ENCODE measurements at regions of chr9 and their contacts with region 1.

Region 1: DNA sequence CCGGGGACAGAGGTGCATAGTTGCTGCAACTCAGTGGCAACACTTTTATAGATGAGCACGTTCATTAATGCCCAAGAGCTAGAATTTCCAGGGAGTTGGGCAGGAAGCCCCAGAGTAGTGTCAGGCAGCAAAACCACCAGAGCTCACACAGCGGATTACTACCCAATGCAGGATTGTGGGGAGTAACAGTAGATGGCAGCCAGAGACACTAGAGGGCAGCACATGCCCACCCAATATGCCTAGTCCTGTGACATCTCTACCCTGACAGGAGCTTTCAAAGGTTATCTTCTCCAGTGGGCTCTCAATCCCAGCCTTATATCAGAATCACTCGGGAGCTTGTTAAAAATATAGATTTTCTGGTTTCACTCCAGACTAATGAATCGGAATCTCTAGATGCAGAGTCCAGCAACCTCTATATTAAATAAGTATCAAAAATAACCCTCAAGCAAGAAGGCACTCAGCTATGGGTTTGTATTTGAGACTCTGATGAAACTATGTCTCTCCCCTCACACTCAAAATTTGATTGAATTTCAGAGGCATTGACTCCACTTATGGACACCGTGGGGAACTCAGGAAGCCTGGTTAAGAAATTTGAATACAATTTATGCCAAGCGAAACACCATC is 58.4 kb upstream of the PHF24 start:
- DNase-seq: peak; percentile 59 to 84 (median 77)
- ATAC-seq: peak; percentile 100
- H3K4me3 ChIP-seq: no peak overlapping the region
- H3K4me3 Mint-ChIP-seq: no peak overlapping the region
- H3K27ac ChIP-seq: no peak overlapping the region
- H3K27ac Mint-ChIP-seq: no peak overlapping the region
- H3K4me1 ChIP-seq: no peaks in the 10 kb centered on the region
- H3K4me1 Mint-ChIP-seq: no peaks in the 10 kb centered on the region
- H3K27me3 ChIP-seq: no peaks in the 10 kb centered on the region
- H3K27me3 Mint-ChIP-seq: peaks cover 27 to 59% (median 36%) of the 10 kb centered on the region in 5 donors

Region 2: DNA sequence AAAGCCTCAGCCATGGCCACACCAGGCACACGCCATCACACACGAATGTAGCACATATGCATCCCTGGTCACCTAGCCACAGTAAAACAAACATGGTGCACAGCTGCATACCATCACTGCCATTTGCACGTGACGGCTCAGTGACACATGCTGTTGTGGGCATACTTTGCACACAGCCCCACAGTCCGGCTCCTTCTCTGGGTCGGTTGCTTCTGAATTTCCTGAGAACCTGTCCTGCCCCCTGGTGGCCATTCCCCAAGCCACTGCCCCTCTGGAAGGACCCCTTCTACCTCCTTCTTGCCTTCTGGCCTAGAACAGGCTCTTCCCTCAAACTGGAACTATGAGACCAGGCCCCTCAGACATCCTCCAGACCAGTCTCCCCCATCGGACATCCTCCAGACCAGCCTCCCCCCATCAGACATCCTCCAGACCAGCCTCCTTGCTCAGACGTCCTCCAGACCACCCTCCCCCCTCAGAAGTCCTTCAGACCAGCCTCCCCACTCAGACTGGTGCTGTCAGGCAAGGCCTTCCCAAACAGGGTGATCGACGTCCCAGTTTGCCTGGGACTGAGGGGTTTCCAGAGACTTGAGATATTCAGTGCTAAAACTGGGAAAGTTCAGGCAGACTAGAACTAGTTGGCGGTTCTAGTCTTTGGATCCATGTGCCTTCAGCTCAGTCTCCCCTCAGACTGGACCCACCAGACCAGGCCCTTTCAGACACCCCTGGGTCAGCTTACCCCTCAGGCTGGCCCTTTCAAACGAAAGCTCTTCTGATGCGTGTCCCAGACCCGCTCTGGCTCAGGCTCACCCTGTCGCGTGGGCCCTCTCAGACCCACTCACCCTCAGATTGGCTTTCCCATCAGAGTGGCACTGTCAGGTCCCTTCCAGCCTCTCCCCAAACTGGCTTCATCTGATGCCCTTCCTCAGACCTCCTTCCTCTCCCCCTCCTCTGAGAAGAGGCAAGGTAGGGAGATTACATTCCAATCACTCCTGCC is 352.5 kb before region 1 on chr9:
- CTCF ChIA-PET with region 1: no interaction called
- POLR2A ChIA-PET with region 1: no interaction called
- intact Hi-C with region 1: no loop called
- DNase-seq: peak in 5 of 9 donors; percentile 21 to 47 (median 23)
- ATAC-seq: peak; percentile 58
- H3K4me3 ChIP-seq: no peak overlapping the region
- H3K4me3 Mint-ChIP-seq: peak overlapping the region in 1 of 10 donors; percentile 34
- H3K27ac ChIP-seq: no peak overlapping the region
- H3K27ac Mint-ChIP-seq: no peak overlapping the region
- H3K4me1 ChIP-seq: no peaks in the 10 kb centered on the region
- H3K4me1 Mint-ChIP-seq: peaks cover 0 to 10% (median 0%) of the 10 kb centered on the region in 7 donors
- H3K27me3 ChIP-seq: no peaks in the 10 kb centered on the region
- H3K27me3 Mint-ChIP-seq: peaks cover 7 to 34% (median 12%) of the 10 kb centered on the region in 5 donors

Region 3: DNA sequence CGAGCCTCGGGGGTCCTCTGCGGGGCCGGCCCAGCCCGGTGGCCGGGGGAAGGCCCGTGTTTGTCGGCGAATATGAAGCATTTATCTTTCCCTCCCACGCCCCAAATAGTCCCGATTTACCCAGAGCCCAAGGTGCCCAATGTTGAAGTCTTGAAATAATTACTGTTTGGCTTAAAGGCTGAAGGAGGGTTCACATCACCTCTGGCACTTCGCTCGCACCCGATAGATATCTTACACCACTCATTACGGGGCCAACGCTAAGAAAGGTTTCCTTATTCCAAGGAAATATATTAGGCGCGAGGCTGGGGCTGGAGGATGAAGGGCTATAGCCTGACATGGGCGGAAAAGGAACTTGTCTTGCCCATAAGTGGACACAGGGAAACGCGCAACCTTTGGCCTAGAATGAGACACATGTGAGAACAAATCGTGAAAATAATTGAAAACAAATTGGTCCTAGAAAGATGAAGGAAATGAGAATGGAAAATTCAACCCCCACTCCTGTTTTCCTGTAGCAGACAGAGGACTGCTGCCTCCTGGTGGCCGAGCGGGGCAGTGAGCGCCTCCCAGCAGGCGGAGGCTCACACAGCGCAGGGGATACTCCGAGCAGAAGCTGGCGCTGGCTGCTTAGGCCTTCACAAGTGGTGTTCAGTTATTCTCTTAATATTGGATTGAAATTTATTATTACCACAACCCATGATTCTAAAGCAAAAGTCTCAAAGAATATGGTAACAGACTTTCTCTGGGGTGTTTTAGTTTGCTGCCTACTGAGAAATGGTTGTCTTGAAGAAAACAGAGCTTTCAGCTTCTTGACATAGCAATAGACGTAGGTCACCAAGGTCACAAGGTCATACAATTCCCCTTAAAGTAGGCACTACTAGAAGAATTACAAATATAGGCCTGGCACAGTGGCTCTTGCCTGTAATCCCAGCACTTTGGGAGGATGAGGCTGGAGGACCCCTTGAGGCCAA is 197.6 kb before region 1 on chr9:
- CTCF ChIA-PET with region 1: no interaction called
- POLR2A ChIA-PET with region 1: no interaction called
- intact Hi-C with region 1: loop called in 1 of 2 experiments (anchors 5 kb)
- DNase-seq: peak; percentile 59 to 83 (median 73)
- ATAC-seq: peak; percentile 90
- H3K4me3 ChIP-seq: peak overlapping the region; percentile 61
- H3K4me3 Mint-ChIP-seq: peak overlapping the region; percentile 80 to 91 (median 84)
- H3K27ac ChIP-seq: no peak overlapping the region
- H3K27ac Mint-ChIP-seq: peak overlapping the region in 7 of 9 donors; percentile 1 to 84 (median 20)
- H3K4me1 ChIP-seq: no peaks in the 10 kb centered on the region
- H3K4me1 Mint-ChIP-seq: peaks cover 5 to 9% (median 6%) of the 10 kb centered on the region in 7 donors
- H3K27me3 ChIP-seq: no peaks in the 10 kb centered on the region
- H3K27me3 Mint-ChIP-seq: peaks cover 0 to 17% (median 0%) of the 10 kb centered on the region in 5 donors

Region 4: DNA sequence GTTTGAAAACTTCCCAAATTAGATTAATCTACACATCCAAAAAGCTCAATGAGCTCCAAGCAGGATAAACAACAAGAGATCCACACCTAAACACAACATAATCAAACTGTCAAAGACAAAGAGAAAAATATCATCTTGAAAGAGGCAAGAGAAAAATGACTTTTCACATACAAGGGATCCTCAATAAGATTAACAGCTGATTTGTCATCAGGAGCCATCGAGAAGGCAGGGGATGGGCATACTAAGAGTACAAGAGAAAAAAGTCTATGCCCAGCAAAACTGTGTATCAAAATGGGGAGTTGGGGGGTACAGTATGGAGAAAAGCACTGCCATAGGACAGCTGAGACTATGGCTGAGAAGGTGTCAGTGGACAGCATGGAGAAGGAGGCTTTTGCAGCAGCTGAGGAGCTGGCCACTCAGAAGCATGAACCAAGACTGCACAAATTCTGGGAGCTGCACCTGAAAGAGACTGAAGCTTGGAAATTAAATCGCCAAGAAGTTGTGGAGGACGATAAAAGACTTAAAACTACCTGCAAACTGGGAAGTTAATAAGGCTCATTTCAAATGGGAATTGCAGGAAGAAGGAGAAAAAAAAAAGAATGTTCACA is 110.8 kb after region 1 on chr9:
- CTCF ChIA-PET with region 1: no interaction called
- POLR2A ChIA-PET with region 1: no interaction called
- intact Hi-C with region 1: no loop called
- DNase-seq: no peak
- ATAC-seq: no peak
- H3K4me3 ChIP-seq: no peak overlapping the region
- H3K4me3 Mint-ChIP-seq: no peak overlapping the region
- H3K27ac ChIP-seq: no peak overlapping the region
- H3K27ac Mint-ChIP-seq: no peak overlapping the region
- H3K4me1 ChIP-seq: peaks cover 0 to 4% of the 10 kb centered on the region in 2 donors
- H3K4me1 Mint-ChIP-seq: peaks cover 0 to 17% (median 13%) of the 10 kb centered on the region in 7 donors
- H3K27me3 ChIP-seq: no peaks in the 10 kb centered on the region
- H3K27me3 Mint-ChIP-seq: no peaks in the 10 kb centered on the region

Region 5: GRCh38 chr9:35051069-35051967 is 151.7 kb after region 1 on chr9:
- CTCF ChIA-PET with region 1: interaction called, 20 read pairs
- POLR2A ChIA-PET with region 1: no interaction called
- intact Hi-C with region 1: loop called (anchors 1 kb)
- DNase-seq: peak in 8 of 9 donors; percentile 23 to 53 (median 46)
- ATAC-seq: peak; percentile 79
- H3K4me3 ChIP-seq: no peak overlapping the region
- H3K4me3 Mint-ChIP-seq: peak overlapping the region in 1 of 10 donors; percentile 15
- H3K27ac ChIP-seq: no peak overlapping the region
- H3K27ac Mint-ChIP-seq: peak overlapping the region in 3 of 9 donors; percentile 0 to 22 (median 1)
- H3K4me1 ChIP-seq: no peaks in the 10 kb centered on the region
- H3K4me1 Mint-ChIP-seq: peaks cover 0 to 9% (median 4%) of the 10 kb centered on the region in 7 donors
- H3K27me3 ChIP-seq: no peaks in the 10 kb centered on the region
- H3K27me3 Mint-ChIP-seq: no peaks in the 10 kb centered on the region

Region 6: DNA sequence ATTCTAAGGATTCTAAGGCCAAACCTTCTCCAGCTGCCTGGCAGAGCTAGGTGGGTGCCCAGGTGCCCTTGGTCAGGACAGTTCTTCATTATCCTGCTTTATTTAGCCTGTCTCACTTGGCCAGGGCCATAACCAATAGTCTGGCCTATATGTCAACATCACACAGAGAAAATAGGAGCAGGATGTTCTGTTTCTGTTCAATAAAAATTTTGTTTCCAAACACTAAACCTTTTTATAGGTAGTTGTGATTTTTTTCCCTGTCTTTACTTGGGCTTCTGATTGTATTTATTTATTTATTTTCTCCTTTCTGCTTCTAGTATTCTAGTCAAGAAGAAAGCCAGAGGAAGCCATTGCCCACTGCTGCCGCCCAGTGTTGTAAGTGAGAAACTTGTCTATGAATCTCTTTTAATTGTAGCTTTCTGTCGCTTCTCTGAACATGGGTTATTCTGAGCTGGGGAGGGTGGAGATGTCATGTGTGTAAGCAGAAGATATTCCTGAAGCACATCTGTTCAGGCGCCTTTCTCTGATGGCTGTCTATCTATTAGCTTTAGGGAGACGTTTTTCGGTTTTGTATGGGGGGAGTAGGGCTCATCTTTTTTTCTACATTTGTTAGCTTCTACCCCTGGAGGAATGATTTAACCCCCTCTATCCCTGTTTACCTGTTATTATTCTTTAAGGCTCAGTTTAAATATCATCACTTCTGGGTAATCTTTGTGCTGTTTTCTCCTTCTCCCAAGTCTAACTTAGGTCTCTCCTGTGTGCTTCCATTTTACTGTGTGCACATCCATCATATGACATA is 359.2 kb after region 1 on chr9:
- CTCF ChIA-PET with region 1: interaction called, 5 read pairs
- POLR2A ChIA-PET with region 1: no interaction called
- intact Hi-C with region 1: loop called in 1 of 2 experiments (anchors 2 kb)
- DNase-seq: peak in 7 of 9 donors; percentile 12 to 51 (median 38)
- ATAC-seq: peak; percentile 58
- H3K4me3 ChIP-seq: no peak overlapping the region
- H3K4me3 Mint-ChIP-seq: no peak overlapping the region
- H3K27ac ChIP-seq: no peak overlapping the region
- H3K27ac Mint-ChIP-seq: no peak overlapping the region
- H3K4me1 ChIP-seq: no peaks in the 10 kb centered on the region
- H3K4me1 Mint-ChIP-seq: no peaks in the 10 kb centered on the region
- H3K27me3 ChIP-seq: no peaks in the 10 kb centered on the region
- H3K27me3 Mint-ChIP-seq: peaks cover 0 to 12% (median 6%) of the 10 kb centered on the region in 5 donors

Region 7: GRCh38 chr9:35553670-35554543 is 654.3 kb after region 1 on chr9:
- CTCF ChIA-PET with region 1: interaction called, 11 read pairs
- POLR2A ChIA-PET with region 1: interaction called, 3 read pairs
- intact Hi-C with region 1: no loop called
- DNase-seq: peak in 7 of 9 donors; percentile 17 to 51 (median 41)
- ATAC-seq: peak; percentile 89
- H3K4me3 ChIP-seq: no peak overlapping the region
- H3K4me3 Mint-ChIP-seq: no peak overlapping the region
- H3K27ac ChIP-seq: no peak overlapping the region
- H3K27ac Mint-ChIP-seq: no peak overlapping the region
- H3K4me1 ChIP-seq: no peaks in the 10 kb centered on the region
- H3K4me1 Mint-ChIP-seq: peaks cover 0 to 3% (median 0%) of the 10 kb centered on the region in 7 donors
- H3K27me3 ChIP-seq: no peaks in the 10 kb centered on the region
- H3K27me3 Mint-ChIP-seq: peaks cover 0 to 2% (median 0%) of the 10 kb centered on the region in 5 donors